ENCODE measurements at regions of chr3 and their contacts with region 1.

Region 1: DNA sequence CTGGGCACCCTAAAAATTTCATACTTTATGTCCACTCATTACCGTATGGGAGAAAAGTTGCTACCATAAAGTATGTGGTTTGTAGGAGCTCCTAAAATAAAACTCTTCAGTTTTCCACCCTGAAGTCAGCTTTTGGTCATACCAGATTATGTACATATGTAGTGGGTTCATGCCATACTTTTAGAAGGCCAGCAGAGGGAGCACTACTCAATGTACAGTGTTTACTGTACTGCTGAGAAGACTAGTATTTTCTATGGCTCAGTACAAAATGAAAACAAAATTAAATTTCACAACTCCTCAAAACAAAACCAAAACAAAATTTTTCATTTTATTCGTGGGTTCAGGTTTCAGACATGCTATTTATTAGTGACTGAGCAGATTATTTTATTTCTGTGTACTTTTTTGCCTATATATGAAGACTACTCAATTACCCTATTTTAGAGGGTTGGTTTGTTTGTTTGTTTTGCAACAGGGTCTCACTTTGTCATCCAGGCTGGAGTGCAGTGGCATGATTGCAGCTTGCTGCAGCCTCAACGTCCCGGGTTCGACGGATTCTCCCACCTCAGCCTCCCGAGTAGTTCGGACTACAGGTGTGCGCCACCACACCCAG is 24.3 kb downstream of the NXPE3 start:
- DNase-seq: peak; percentile 76
- H3K4me3 Mint-ChIP-seq: no peak overlapping the region
- H3K27ac Mint-ChIP-seq: peak overlapping the region; percentile 50
- H3K4me1 Mint-ChIP-seq: peaks cover 37% of the 10 kb centered on the region
- H3K27me3 Mint-ChIP-seq: no peaks in the 10 kb centered on the region

Region 2: GRCh38 chr3:101695779-101696372 is 107.4 kb before region 1 on chr3:
- CTCF ChIA-PET with region 1: interaction called, 6 read pairs
- intact Hi-C with region 1: loop called (anchors 1 kb)
- DNase-seq: peak; percentile 52
- H3K4me3 Mint-ChIP-seq: no peak overlapping the region
- H3K27ac Mint-ChIP-seq: no peak overlapping the region
- H3K4me1 Mint-ChIP-seq: peaks cover 7% of the 10 kb centered on the region
- H3K27me3 Mint-ChIP-seq: no peaks in the 10 kb centered on the region

Region 3: DNA sequence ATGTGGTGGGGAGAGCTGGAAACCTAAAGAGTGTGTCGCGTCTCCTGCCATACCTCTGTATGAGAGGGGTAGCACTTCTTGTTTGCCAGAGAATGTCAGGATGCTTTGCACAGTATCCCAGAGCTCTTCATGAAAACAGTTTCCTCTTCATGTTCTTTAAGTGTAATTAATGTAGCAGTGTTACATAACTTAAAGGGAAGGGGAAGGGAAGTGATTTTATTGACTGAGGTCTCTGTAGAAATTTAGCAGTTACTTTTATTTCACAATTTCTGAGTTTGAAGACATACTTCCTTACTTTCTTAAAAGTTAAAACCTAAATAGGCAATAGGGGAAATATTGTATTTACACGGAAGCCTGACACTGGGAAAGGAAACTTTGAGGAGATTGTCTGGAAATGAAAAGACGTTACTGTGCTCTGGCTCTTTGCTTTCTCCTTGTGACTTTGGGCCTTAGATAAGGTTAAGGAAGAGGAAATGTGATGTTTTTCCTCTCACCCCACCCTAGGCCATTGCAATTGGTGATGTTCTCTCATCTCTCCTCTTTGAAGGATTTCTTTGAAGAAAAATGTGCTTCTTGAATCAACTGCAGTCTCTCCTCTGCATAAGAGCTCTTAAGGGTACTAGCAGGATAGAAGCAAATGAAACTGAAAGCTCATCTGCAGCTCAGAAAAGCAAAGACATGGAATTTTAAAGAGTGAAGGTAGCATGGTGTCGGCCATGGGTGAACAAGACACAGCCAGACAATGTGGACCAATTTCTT is 18.2 kb before region 1 on chr3:
- CTCF ChIA-PET with region 1: interaction called, 52 read pairs
- intact Hi-C with region 1: loop called (anchors 1 kb)
- DNase-seq: no peak
- H3K4me3 Mint-ChIP-seq: peak overlapping the region; percentile 62
- H3K27ac Mint-ChIP-seq: peak overlapping the region; percentile 90
- H3K4me1 Mint-ChIP-seq: peaks cover 70% of the 10 kb centered on the region
- H3K27me3 Mint-ChIP-seq: no peaks in the 10 kb centered on the region

Region 4: GRCh38 chr3:101791778-101792177 is 11.5 kb before region 1 on chr3:
- CTCF ChIA-PET with region 1: interaction called, 52 read pairs
- intact Hi-C with region 1: loop called (anchors 1 kb)
- DNase-seq: no peak
- H3K4me3 Mint-ChIP-seq: no peak overlapping the region
- H3K27ac Mint-ChIP-seq: peak overlapping the region; percentile 32
- H3K4me1 Mint-ChIP-seq: peaks cover 62% of the 10 kb centered on the region
- H3K27me3 Mint-ChIP-seq: no peaks in the 10 kb centered on the region

Region 5: GRCh38 chr3:101868534-101869464 is 65.5 kb after region 1 on chr3:
- CTCF ChIA-PET with region 1: no interaction called
- intact Hi-C with region 1: no loop called
- DNase-seq: no peak
- H3K4me3 Mint-ChIP-seq: no peak overlapping the region
- H3K27ac Mint-ChIP-seq: no peak overlapping the region
- H3K4me1 Mint-ChIP-seq: peaks cover 9% of the 10 kb centered on the region
- H3K27me3 Mint-ChIP-seq: no peaks in the 10 kb centered on the region